Panc1 (cell line): ENCODE measurements at regions of chr19 and their contacts with region 1.

Region 1: DNA sequence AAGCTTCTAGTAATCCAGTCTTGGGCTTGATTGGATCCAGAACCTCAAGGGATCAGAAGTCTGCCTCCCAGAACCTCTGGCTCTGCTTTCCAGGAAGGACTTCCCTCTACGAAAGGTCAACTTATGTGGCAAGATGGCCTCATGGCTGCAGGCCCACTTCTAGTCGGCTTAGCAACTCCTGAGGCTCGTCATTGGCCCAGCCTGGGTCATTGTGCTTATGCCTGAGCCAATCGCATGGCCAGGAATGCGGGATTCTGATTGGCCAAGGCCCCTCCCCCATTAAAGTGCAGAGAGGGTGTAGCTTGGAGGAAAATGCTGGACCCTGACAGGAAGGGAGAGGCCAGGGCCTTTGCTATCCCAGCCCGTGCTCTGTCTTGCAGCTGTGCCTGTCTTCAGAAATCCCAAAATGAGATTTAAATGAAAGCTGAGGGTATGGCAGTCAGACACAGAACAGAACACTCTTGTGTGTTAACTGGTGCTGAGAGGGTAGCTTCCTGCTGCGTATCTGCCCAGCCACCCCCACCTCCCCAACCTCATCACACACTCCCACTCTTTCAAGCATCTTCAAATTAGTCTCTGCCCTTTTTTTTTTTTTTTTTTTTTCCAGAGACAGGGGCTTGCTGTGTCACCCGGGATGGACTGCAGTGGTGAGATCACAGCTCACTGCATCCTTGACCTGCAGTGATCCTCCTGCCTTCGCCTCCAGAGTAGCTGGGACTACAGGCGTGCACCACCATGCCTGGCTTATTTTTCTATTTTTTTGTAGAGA is 5.5 kb upstream of the CCNE1 start:
- DNase-seq: no peak
- ATAC-seq: no peak
- H3K4me3 ChIP-seq: no peak overlapping the region
- H3K27ac ChIP-seq: no peak overlapping the region
- H3K4me1 ChIP-seq: peaks cover 8% of the 10 kb centered on the region
- H3K27me3 ChIP-seq: no peaks in the 10 kb centered on the region
- CTCF ChIP-seq: no peak

Region 2: DNA sequence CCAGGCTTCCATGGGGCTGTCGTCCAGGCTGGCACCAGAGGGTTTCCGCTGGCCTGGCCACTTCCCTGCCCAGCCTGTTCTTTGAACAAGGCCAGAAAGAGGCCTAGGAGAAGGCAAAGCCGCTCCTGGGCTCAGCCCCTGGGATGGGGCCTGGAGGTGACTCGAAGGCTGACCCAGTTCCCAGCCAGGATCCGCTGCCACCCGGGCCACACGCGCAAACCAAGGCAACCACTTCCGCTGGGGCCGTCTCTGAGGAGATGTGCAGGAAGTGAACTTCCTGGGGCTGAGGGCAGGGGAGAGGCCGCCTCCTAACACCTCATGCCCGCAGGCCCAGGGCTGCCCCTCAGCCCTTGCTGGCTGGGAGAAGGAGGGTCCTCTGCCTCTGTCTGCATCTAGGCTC is 125.8 kb before region 1 on chr19:
- CTCF ChIA-PET with region 1: no interaction called
- POLR2A ChIA-PET with region 1: no interaction called
- in situ Hi-C with region 1: no loop called
- intact Hi-C with region 1: no loop called
- DNase-seq: no peak
- ATAC-seq: peak; percentile 39
- H3K4me3 ChIP-seq: no peak overlapping the region
- H3K27ac ChIP-seq: no peak overlapping the region
- H3K4me1 ChIP-seq: peaks cover 5% of the 10 kb centered on the region; the same call in 1 of the 2 replicates
- H3K27me3 ChIP-seq: no peaks in the 10 kb centered on the region
- CTCF ChIP-seq: no peak

Region 3: DNA sequence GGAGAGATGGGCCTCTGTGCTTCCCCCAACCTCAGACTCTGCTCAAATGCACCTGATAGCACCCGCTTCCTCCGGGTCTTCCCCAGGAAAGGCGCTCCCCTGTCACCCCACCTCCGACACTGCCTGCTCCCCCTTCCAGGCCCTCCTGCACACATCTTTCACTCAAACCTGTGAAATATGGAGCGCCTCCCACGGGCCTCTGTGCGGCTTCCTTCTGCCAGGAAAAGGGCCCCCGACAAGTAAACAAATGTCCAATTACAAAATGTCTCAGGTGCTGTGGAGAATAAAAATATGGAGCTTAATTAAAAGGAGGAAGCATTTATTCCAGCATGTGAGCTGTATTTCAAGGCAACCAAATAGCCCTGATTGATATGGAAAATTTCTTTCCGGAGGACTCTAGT is 10.1 kb before region 1 on chr19:
- CTCF ChIA-PET with region 1: no interaction called
- POLR2A ChIA-PET with region 1: interaction called, 18 read pairs
- in situ Hi-C with region 1: no loop called
- intact Hi-C with region 1: no loop called
- DNase-seq: no peak
- ATAC-seq: no peak
- H3K4me3 ChIP-seq: no peak overlapping the region
- H3K27ac ChIP-seq: no peak overlapping the region
- H3K4me1 ChIP-seq: no peaks in the 10 kb centered on the region
- H3K27me3 ChIP-seq: no peaks in the 10 kb centered on the region
- CTCF ChIP-seq: no peak

Region 4: GRCh38 chr19:29850482-29850881 is 44.2 kb after region 1 on chr19:
- CTCF ChIA-PET with region 1: no interaction called
- POLR2A ChIA-PET with region 1: interaction called, 27 read pairs
- in situ Hi-C with region 1: no loop called
- intact Hi-C with region 1: no loop called
- DNase-seq: no peak
- ATAC-seq: no peak
- H3K4me3 ChIP-seq: no peak overlapping the region
- H3K27ac ChIP-seq: no peak overlapping the region
- H3K4me1 ChIP-seq: no peaks in the 10 kb centered on the region
- H3K27me3 ChIP-seq: no peaks in the 10 kb centered on the region
- CTCF ChIP-seq: no peak